ENCODE measurements at regions of chr16 and their contacts with region 1.

Region 1: GRCh38 chr16:56450986-56451752 is at the starts of genes NUDT21 and OGFOD1:
- DNase-seq: peak; percentile 96 to 100
- ATAC-seq: peak; percentile 100
- H3K4me3 ChIP-seq: peak within 1 kb of the TSS; percentile 74
- H3K27ac ChIP-seq: peak within 1 kb of the TSS; percentile 81 to 93
- H3K4me1 ChIP-seq: peaks cover 36% of the 10 kb centered on the region
- CTCF ChIP-seq: no peak
- EP300 ChIP-seq: no peak
- POLR2A ChIP-seq: peak; percentile 57
- RAD21 ChIP-seq: no peak
- polyA plus RNA-seq, gene NUDT21: 128 and 153 TPM in 2 replicates
- polyA plus RNA-seq, gene OGFOD1: 72.6 and 94.1 TPM in 2 replicates

Region 2: GRCh38 chr16:56409195-56409594 is 42.0 kb before region 1 on chr16:
- CTCF ChIA-PET with region 1: interaction called, 3 read pairs
- POLR2A ChIA-PET with region 1: interaction called, 11 read pairs
- DNase-seq: peak; percentile 20 to 65
- ATAC-seq: peak; percentile 83 to 85
- H3K4me3 ChIP-seq: peak overlapping the region; percentile 25; the same call in 2 of the 3 replicates
- H3K27ac ChIP-seq: peak overlapping the region; percentile 89 to 90
- H3K4me1 ChIP-seq: peaks cover 50% of the 10 kb centered on the region
- CTCF ChIP-seq: no peak
- EP300 ChIP-seq: no peak
- POLR2A ChIP-seq: no peak
- RAD21 ChIP-seq: no peak

Region 3: GRCh38 chr16:56470666-56471065 is 19.5 kb after region 1 on chr16:
- CTCF ChIA-PET with region 1: no interaction called
- POLR2A ChIA-PET with region 1: interaction called, 10 read pairs
- DNase-seq: no peak
- ATAC-seq: no peak
- H3K4me3 ChIP-seq: no peak overlapping the region
- H3K27ac ChIP-seq: no peak overlapping the region
- H3K4me1 ChIP-seq: no peaks in the 10 kb centered on the region
- CTCF ChIP-seq: no peak
- EP300 ChIP-seq: no peak
- POLR2A ChIP-seq: no peak
- RAD21 ChIP-seq: no peak

Region 4: GRCh38 chr16:57609541-57610401 is 1158.6 kb after region 1 on chr16:
- CTCF ChIA-PET with region 1: no interaction called
- POLR2A ChIA-PET with region 1: no interaction called
- DNase-seq: no peak
- ATAC-seq: peak in 1 of 2 experiments; percentile 21; a peak in 3 of 6 replicates
- H3K4me3 ChIP-seq: no peak overlapping the region
- H3K27ac ChIP-seq: peak overlapping the region; percentile 69 to 74
- H3K4me1 ChIP-seq: peaks cover 71% of the 10 kb centered on the region
- CTCF ChIP-seq: no peak
- EP300 ChIP-seq: no peak
- POLR2A ChIP-seq: no peak
- RAD21 ChIP-seq: peak in 1 of 2 experiments; percentile 10; a peak in 1 of 5 replicates

Measured in A549 (cell line).